Activated CD4-positive, alpha-beta T cell treated with anti-CD3 and anti-CD28 coated beads for 36 hours (primary cell): ENCODE measurements at regions of chr18 and their contacts with region 1.

Region 1: GRCh38 chr18:70931942-70932814 is 643.3 kb downstream of the SOCS6 start:
- DNase-seq: no peak
- ATAC-seq: no peak
- H3K4me3 Mint-ChIP-seq: no peak overlapping the region
- H3K27ac Mint-ChIP-seq: no peak overlapping the region
- H3K4me1 Mint-ChIP-seq: peaks cover 7% of the 10 kb centered on the region
- H3K27me3 Mint-ChIP-seq: no peaks in the 10 kb centered on the region

Region 2: DNA sequence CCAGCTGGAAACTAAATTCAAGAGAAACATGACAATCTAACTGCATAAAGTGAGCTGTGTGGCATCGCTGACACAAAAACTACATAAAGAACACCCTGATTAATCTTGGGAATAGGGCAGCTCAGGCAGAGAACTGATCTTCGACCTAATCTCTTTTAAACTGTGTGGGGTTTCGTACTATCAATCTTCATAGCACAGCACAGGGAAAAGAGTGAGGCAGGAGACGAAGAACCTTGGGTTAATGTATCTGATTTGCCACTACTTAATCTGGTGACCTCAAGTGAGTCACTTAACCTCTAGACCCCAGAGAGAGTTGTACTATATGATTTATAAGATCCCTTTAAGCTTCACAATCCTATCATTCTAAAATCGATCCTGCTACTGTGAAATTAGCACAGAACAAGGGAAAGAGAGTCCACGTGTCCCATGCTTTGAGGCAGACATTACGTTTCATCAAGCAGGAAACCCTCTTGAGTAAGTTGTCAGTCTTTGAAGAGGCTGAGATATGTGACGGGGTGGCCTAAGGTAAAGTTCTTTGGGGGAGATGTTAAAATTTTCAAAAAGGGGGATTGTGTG is 123.6 kb before region 1 on chr18:
- CTCF ChIA-PET with region 1: no interaction called
- POLR2A ChIA-PET with region 1: no interaction called
- intact Hi-C with region 1: no loop called
- DNase-seq: no peak
- ATAC-seq: no peak
- H3K4me3 Mint-ChIP-seq: no peak overlapping the region
- H3K27ac Mint-ChIP-seq: no peak overlapping the region
- H3K4me1 Mint-ChIP-seq: no peaks in the 10 kb centered on the region
- H3K27me3 Mint-ChIP-seq: no peaks in the 10 kb centered on the region

Region 3: DNA sequence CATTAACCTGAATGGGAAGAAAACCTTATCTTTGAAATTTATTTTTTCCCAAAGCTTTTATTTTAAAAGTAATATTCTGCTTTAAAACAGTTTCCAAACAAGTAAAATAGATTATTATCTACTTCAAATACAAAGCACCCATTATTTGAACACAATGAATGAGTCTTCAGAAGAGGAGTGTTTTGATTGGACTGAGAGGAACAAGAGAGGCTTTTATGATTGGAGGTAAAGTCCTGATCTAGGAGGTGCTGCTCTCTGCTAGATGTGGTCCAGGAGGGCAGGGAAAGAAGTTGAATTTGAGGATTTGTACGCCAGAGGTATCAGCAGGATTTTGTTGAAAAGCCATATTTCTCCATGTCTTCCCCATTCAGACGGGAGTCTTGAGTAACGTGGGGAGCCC is 257.4 kb after region 1 on chr18:
- CTCF ChIA-PET with region 1: no interaction called
- POLR2A ChIA-PET with region 1: no interaction called
- intact Hi-C with region 1: no loop called
- DNase-seq: no peak
- ATAC-seq: no peak
- H3K4me3 Mint-ChIP-seq: no peak overlapping the region
- H3K27ac Mint-ChIP-seq: no peak overlapping the region
- H3K4me1 Mint-ChIP-seq: no peaks in the 10 kb centered on the region
- H3K27me3 Mint-ChIP-seq: no peaks in the 10 kb centered on the region

Region 4: GRCh38 chr18:71784777-71785176 is 852.6 kb after region 1 on chr18:
- CTCF ChIA-PET with region 1: interaction called, 3 read pairs
- POLR2A ChIA-PET with region 1: no interaction called
- intact Hi-C with region 1: loop called in 1 of 2 experiments (anchors 1 kb)
- DNase-seq: peak; percentile 24
- ATAC-seq: no peak
- H3K4me3 Mint-ChIP-seq: no peak overlapping the region
- H3K27ac Mint-ChIP-seq: no peak overlapping the region
- H3K4me1 Mint-ChIP-seq: no peaks in the 10 kb centered on the region
- H3K27me3 Mint-ChIP-seq: no peaks in the 10 kb centered on the region

Region 5: DNA sequence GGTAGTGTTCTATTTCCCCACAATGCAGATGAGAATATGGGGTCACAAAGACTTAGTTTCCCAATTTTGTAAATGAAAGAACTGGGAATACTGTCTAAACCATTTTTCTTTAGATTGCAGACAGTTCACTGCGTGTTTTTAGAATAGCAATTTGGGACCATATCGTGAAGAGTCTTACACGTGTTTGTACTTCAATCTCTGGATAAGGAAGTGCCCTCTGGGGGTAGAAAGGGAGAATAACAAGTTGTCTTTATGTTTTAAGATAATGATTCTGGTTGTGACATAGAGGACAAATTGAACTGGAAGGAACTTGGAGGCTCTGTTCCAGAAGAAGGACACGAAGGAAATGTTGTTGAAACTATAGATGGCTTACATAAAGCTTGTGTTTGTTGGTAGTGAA is 1154.2 kb after region 1 on chr18:
- CTCF ChIA-PET with region 1: no interaction called
- POLR2A ChIA-PET with region 1: no interaction called
- intact Hi-C with region 1: loop called in 1 of 2 experiments (anchors 10 kb)
- DNase-seq: no peak
- ATAC-seq: peak; percentile 33
- H3K4me3 Mint-ChIP-seq: no peak overlapping the region
- H3K27ac Mint-ChIP-seq: no peak overlapping the region
- H3K4me1 Mint-ChIP-seq: no peaks in the 10 kb centered on the region
- H3K27me3 Mint-ChIP-seq: no peaks in the 10 kb centered on the region